ENCODE measurements at regions of chr6 and their contacts with region 1.

Region 1: GRCh38 chr6:125314019-125314581 is 12.3 kb upstream of the HDDC2 start:
- DNase-seq: peak; percentile 82
- H3K4me3 ChIP-seq: no peak overlapping the region
- H3K27ac ChIP-seq: no peak overlapping the region
- H3K4me1 ChIP-seq: no peaks in the 10 kb centered on the region
- H3K27me3 ChIP-seq: no peaks in the 10 kb centered on the region
- CTCF ChIP-seq: peak; percentile 93

Region 2: DNA sequence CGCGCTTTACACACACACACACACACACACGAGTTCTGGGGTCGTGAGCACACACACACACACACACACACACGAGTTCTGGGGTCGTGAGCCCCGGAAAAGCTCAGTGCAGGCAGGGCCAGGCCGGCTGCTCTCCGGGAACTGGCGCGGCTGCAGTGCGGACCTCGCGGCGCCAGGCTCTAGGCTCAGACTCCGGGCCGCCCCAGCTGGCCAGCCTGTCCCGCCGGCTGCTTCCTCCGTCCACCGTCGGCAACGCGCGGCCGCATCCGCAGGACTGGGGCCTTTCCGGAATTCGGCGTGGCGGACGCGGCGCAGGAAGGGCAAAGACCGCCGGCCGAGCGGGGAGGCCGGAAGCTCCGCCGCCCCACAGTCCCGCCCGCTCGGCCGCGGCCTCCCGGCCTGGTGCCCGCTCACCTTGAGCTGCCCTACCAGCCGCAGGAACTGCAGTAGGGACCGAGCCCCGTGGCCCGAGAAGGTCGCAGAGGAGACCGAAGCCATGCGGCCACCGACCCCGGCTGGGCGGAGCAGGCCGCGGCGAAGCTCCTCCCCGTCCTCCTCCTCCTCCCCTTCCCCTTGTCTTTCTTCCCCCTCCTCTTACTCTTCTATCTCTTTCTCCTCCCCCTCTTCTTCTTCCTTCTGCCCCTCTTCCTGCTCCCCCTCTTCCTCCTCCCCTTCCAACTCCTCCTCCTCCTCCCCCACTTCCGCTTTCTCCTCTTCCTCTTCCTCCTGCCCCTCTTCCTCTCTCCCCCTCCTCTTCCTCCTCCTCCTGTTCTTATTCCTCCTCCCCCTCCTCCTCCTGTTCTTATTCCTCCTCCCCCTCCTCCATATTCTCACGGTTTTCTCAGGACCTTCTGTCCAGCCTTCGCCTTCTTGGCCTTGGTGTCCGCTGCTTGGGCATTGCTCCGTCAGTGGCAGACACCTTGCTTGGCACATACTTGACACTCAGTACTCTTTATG is 12.4 kb before region 1 on chr6 and contains the start of gene HDDC2:
- CTCF ChIA-PET with region 1: no interaction called
- POLR2A ChIA-PET with region 1: no interaction called
- intact Hi-C with region 1: no loop called
- DNase-seq: peak; percentile 53
- H3K4me3 ChIP-seq: peak within 1 kb of the TSS; percentile 89
- H3K27ac ChIP-seq: peak within 1 kb of the TSS; percentile 89
- H3K4me1 ChIP-seq: peaks cover 14% of the 10 kb centered on the region
- H3K27me3 ChIP-seq: no peaks in the 10 kb centered on the region
- CTCF ChIP-seq: no peak
- total RNA-seq, gene HDDC2: 87.6 and 93.2 TPM in 2 replicates

Region 3: GRCh38 chr6:125753218-125753936 is 439.3 kb after region 1 on chr6:
- CTCF ChIA-PET with region 1: interaction called, 11 read pairs
- POLR2A ChIA-PET with region 1: no interaction called
- intact Hi-C with region 1: loop called (anchors 1 kb)
- DNase-seq: peak; percentile 55
- H3K4me3 ChIP-seq: no peak overlapping the region
- H3K27ac ChIP-seq: no peak overlapping the region
- H3K4me1 ChIP-seq: peaks cover 10% of the 10 kb centered on the region
- H3K27me3 ChIP-seq: peaks cover 36% of the 10 kb centered on the region
- CTCF ChIP-seq: peak; percentile 60

Region 4: DNA sequence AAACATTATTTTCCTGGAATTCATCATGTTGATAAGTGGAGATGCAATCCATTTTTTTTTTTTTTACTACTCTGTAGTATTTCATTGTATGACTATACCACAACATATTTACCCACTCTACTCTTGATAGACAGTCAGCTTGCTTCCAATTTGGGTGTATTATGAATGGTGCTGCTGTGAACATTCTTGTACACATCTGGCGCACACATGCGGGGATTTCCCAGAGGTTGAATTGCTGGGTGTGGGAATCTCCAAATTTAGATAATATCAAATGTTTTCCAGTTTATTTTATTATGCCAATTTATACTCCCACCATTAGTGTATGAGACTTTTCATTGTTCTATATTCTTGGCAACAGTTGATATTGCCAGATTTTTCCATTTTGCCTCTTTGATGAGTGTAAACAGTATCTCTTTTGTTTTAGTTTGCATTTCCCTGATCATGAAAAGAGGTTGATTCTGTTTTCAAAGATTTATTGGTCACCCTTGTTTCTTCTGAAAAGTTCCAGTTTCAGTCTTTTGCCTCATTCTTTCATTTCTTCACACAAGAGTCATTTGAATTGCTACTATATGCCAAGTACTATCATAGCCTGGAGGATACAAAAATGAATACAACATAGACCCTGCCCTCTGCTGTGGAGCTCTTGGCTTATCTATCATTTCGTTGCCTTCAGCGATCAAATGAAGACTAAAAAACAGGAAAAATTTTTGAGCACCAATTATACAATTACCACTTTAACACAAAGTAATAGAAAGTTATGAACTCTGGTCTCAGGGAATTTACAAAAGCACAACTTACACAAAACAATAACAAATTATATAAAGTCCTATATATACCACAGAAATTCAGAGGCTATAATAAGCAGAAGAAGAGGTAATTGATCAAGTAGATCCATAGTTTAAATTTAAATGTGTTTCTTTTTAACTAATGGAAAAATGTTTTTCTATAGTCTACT is 459.6 kb after region 1 on chr6:
- CTCF ChIA-PET with region 1: interaction called, 4 read pairs
- POLR2A ChIA-PET with region 1: no interaction called
- intact Hi-C with region 1: loop called (anchors 1 kb)
- DNase-seq: no peak
- H3K4me3 ChIP-seq: no peak overlapping the region
- H3K27ac ChIP-seq: no peak overlapping the region
- H3K4me1 ChIP-seq: no peaks in the 10 kb centered on the region
- H3K27me3 ChIP-seq: no peaks in the 10 kb centered on the region
- CTCF ChIP-seq: no peak

Measured in A673 (cell line).